K562 (cell line): ENCODE measurements at regions of chr2 and their contacts with region 1.

Region 1: DNA sequence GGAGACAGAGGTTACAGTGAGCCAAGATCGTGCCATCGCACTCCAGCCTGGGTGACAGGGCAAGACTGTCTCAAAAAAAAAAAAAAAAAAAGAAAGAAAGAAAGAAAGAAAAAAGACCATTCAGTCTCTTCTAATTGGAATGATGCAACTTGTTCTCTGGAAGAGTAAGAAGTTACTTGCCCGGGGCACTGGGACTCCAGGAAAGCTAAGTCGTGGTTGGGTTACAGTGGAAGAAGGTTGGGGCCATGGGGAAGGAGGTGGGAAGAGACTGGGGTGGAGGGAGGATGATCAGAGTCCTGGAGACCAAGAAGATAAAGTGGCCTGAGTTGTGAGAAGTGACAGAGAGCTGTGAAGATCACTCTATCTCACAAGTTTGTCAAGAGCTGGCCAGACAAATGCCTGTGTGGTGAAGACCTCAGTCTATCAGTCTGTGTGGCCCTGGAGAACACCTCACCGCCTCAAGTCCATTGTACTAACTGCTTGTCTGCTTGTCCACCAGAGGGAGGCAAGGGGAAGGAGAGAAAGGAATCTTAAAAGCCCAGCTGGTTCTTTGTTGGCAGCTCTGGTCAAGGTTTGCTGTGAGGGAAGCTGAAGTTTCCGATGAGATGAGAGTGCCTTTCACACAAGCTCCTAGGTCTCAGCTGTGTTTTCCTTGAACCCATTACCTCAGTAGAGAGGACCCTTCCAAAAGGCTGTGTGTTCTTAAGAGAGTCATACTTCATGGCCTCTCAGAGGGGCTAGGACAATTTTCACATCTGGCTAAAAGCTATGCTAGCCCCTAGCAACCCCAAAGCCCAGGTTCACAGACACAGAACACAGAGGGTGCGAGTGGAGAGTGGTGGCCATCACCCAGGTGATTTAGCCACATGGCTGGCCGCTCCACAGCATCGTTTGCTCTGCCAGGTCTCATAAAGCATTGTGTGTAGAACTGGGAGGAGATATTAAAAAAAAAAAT is 72.0 kb upstream of the TMEM178A start:
- DNase-seq: peak in 2 of 4 experiments; percentile 37 to 61
- ATAC-seq: peak; percentile 97
- H3K4me3 ChIP-seq: no peak overlapping the region
- H3K27ac ChIP-seq: no peak overlapping the region
- H3K4me1 ChIP-seq: no peaks in the 10 kb centered on the region
- H3K27me3 ChIP-seq: peaks cover 4 to 6% of the 10 kb centered on the region in 2 experiments; a peak in 4 of 5 replicates
- CTCF ChIP-seq: peak; percentile 57 to 67 (median 59)
- EP300 ChIP-seq: no peak
- POLR2A ChIP-seq: no peak
- RAD21 ChIP-seq: peak; percentile 46 to 70

Region 2: DNA sequence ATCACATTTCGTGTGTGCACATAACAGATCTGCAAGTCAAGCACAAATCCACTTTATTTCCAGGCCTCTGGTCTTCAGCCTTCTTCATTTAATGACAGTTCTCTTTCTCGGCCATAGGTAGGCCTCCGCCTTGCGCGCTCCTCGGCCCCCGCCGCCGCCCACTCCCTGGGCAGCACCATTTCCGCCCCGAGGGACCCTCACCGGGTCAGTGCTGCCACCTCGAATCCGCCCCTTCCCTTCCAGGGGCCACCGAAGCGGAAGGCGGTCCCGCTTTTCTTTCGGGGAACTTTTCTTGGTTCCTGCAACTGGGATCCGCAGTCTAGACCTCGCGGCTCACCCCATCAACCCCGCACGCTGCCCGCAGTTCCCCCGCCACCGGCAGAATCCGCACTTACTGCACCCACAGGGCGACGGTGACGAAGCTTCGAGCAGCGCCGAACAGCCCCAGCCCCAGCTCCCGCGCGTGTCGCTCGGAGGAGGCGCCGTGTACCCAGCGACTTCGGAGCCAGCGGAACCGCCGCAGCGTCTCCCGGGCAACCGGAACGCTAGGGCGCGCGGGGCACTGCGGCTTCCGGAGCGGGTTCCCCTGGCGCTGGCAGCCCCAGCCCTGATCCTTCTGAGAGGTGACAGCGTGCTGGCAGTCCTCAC is 350.1 kb before region 1 on chr2 and contains the start of gene CDKL4:
- CTCF ChIA-PET with region 1: no interaction called
- POLR2A ChIA-PET with region 1: no interaction called
- in situ Hi-C with region 1: no loop called
- intact Hi-C with region 1: no loop called
- DNase-seq: no peak
- ATAC-seq: no peak
- H3K4me3 ChIP-seq: no peak within 1 kb of the TSS
- H3K27ac ChIP-seq: no peak within 1 kb of the TSS
- H3K4me1 ChIP-seq: no peaks in the 10 kb centered on the region
- H3K27me3 ChIP-seq: no peaks in the 10 kb centered on the region
- CTCF ChIP-seq: no peak
- EP300 ChIP-seq: no peak
- POLR2A ChIP-seq: no peak
- RAD21 ChIP-seq: no peak
- polyA plus RNA-seq, gene CDKL4: not detected

Region 3: DNA sequence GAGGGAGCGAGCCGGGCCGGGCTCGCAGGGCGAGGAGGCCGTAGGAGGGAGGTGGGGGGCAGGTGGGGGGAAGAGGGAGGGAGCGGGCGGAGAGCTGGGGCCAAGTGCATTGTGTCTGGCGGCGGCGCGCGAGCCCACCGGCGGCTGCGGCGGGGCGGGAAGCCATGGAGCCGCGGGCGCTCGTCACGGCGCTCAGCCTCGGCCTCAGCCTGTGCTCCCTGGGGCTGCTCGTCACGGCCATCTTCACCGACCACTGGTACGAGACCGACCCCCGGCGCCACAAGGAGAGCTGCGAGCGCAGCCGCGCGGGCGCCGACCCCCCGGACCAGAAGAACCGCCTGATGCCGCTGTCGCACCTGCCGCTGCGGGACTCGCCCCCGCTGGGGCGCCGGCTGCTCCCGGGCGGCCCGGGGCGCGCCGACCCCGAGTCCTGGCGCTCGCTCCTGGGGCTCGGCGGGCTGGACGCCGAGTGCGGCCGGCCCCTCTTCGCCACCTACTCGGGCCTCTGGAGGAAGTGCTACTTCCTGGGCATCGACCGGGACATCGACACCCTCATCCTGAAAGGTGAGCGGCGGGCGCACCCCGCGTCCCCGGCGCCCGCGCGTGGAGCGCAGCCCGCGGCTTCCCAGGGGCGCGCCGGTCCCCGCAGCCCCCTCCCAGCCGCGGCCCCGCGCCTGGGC is 72.2 kb after region 1 on chr2 and contains the start of gene TMEM178A:
- CTCF ChIA-PET with region 1: no interaction called
- POLR2A ChIA-PET with region 1: no interaction called
- in situ Hi-C with region 1: no loop called
- intact Hi-C with region 1: no loop called
- DNase-seq: no peak
- ATAC-seq: no peak
- H3K4me3 ChIP-seq: no peak within 1 kb of the TSS
- H3K27ac ChIP-seq: no peak within 1 kb of the TSS
- H3K4me1 ChIP-seq: peaks cover 0 to 8% of the 10 kb centered on the region in 2 experiments; a peak in 1 of 5 replicates
- H3K27me3 ChIP-seq: peaks cover 25 to 26% of the 10 kb centered on the region in 2 experiments; a peak in 4 of 5 replicates
- CTCF ChIP-seq: no peak
- EP300 ChIP-seq: no peak
- POLR2A ChIP-seq: no peak
- RAD21 ChIP-seq: no peak
- polyA plus RNA-seq, gene TMEM178A: 0.04 TPM in 1 of 2 experiments, not detected in the other

Region 4: GRCh38 chr2:39703181-39703872 is 109.6 kb after region 1 on chr2:
- CTCF ChIA-PET with region 1: no interaction called
- POLR2A ChIA-PET with region 1: no interaction called
- in situ Hi-C with region 1: no loop called
- intact Hi-C with region 1: loop called (anchors 5 kb)
- DNase-seq: no peak
- ATAC-seq: no peak
- H3K4me3 ChIP-seq: no peak overlapping the region
- H3K27ac ChIP-seq: no peak overlapping the region
- H3K4me1 ChIP-seq: no peaks in the 10 kb centered on the region
- H3K27me3 ChIP-seq: peaks cover 8 to 15% of the 10 kb centered on the region in 2 experiments; a peak in 4 of 5 replicates
- CTCF ChIP-seq: no peak
- EP300 ChIP-seq: no peak
- POLR2A ChIP-seq: no peak
- RAD21 ChIP-seq: no peak

Region 5: DNA sequence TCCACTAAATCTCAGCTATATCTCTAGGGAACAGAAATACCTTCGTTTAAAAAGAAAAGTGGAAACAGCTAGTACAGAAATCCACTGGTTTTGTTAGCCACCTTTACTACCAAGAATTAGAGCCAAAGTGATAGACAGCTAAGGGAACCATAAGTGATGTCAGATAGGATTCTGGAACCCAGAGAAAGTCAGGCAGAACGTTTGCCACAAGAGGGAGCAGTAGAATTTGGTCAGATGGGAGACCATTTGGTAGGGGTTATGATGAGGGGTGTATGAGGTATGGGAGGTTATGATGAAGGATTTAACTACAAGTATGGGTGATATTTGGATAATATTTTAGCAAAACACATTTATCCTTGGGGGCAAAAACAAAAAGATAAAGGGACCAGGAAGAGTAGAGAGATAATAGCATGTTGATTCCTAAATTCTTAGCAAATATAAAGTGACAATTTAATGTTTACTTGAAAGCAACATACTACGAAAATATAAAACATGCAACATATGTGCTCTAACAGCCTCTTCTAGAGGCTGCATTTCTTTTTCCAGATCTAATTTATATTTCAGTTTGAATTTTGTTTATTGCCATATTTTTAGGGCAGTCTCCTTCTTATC is 854.9 kb after region 1 on chr2:
- CTCF ChIA-PET with region 1: no interaction called
- POLR2A ChIA-PET with region 1: no interaction called
- in situ Hi-C with region 1: loop called (anchors 25 kb)
- intact Hi-C with region 1: no loop called
- DNase-seq: peak in 1 of 4 experiments; percentile 8
- ATAC-seq: no peak
- H3K4me3 ChIP-seq: no peak overlapping the region
- H3K27ac ChIP-seq: no peak overlapping the region
- H3K4me1 ChIP-seq: no peaks in the 10 kb centered on the region
- H3K27me3 ChIP-seq: no peaks in the 10 kb centered on the region
- CTCF ChIP-seq: 0 out of 6 replicates have a peak, but pooled peaks of 1 of the 3 experiments have one; percentile 16
- EP300 ChIP-seq: no peak
- POLR2A ChIP-seq: no peak
- RAD21 ChIP-seq: no peak; a peak in 1 of 4 replicates